ENCODE measurements at regions of chr15 and their contacts with region 1.

Region 1: GRCh38 chr15:45919806-45920205 is 285.0 kb downstream of the SQOR start:
- DNase-seq: no peak
- ATAC-seq: no peak

Region 2: GRCh38 chr15:45829336-45830153 is 90.3 kb before region 1 on chr15:
- intact Hi-C with region 1: no loop called
- DNase-seq: no peak
- ATAC-seq: no peak

Region 3: GRCh38 chr15:46077220-46077619 is 157.4 kb after region 1 on chr15:
- intact Hi-C with region 1: loop called (anchors 5 kb)
- DNase-seq: no peak
- ATAC-seq: no peak